Heart left ventricle (tissue), 16 donors: ENCODE measurements at regions of chr5 and their contacts with region 1.

Region 1: DNA sequence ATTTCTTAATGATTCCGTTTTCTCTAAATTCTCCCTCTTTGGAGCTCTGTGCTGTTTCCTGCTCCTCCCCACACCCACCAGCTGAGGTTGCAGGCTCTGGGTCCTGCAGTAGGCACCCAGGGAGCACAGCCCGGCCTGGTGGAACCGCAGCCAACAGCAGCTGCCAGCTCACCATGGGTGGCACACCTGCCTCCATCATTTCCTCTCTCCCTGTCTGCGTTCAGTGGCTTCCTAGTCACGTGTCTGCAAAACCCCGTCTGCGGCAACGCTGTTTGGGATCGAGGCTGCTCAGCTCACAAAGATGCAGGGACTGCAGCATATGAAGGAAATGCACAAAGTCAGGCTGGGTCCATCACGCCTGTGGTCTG is 367.8 kb downstream of the IRX2 start:
- DNase-seq: no peak
- ATAC-seq: no peak
- H3K4me3 ChIP-seq: no peak overlapping the region
- H3K27ac ChIP-seq: no peak overlapping the region
- H3K4me1 ChIP-seq: no peaks in the 10 kb centered on the region
- H3K27me3 ChIP-seq: peaks cover 0 to 16% (median 0%) of the 10 kb centered on the region in 9 donors
- CTCF ChIP-seq: no peak
- POLR2A ChIP-seq: no peak

Region 2: DNA sequence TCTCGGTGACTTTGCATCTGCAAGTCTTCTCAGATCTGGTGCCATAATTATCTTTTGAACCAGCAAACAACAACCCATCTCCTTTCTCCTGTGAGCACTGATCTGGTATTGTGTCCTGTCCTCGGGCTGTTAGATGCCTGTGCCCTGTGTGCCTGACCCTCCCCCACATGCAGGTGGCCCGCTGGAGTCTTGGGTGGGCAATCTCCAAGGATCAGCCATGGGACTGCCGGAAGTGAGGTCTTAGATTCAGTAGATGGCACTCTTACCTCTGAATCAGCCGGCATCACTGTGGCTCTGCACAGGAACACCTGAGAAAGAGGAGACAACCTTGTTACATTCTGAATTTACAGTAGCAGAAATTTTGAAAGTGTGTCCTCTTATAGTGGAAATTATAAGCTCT is 195.4 kb after region 1 on chr5:
- intact Hi-C with region 1: no loop called
- DNase-seq: no peak
- ATAC-seq: no peak
- H3K4me3 ChIP-seq: no peak overlapping the region
- H3K27ac ChIP-seq: no peak overlapping the region
- H3K4me1 ChIP-seq: no peaks in the 10 kb centered on the region
- H3K27me3 ChIP-seq: peaks cover 0 to 16% (median 0%) of the 10 kb centered on the region in 9 donors
- CTCF ChIP-seq: no peak
- POLR2A ChIP-seq: no peak

Region 3: DNA sequence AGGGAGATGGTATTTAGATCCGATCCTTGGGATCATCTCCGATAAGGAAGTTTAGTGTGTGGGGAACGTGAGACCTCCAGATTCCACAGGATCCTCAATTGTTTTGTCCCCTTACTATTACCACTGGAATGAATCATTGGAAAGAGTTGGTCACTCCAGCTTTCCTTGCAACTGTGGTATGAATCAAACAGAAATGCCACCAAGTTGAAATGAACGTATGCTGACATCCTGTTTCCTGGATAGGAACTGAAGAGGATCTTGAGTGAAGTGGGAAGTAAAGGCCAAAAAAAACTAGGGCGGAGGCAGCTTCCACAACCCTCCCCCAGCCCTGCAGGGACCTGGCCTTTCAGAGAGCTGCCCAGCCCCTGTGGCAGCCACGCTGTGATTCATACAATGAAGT is 1235.9 kb after region 1 on chr5:
- intact Hi-C with region 1: loop called in 1 of 10 experiments (anchors 5 kb)
- DNase-seq: no peak
- ATAC-seq: no peak
- H3K4me3 ChIP-seq: no peak overlapping the region
- H3K27ac ChIP-seq: no peak overlapping the region
- H3K4me1 ChIP-seq: no peaks in the 10 kb centered on the region
- H3K27me3 ChIP-seq: peaks cover 0 to 31% (median 0%) of the 10 kb centered on the region in 9 donors
- CTCF ChIP-seq: no peak
- POLR2A ChIP-seq: no peak